Activated CD4-positive, alpha-beta memory T cell treated with anti-CD3 and anti-CD28 coated beads for 36 hours (primary cell): ENCODE measurements at regions of chr11 and their contacts with region 1.

Region 1: DNA sequence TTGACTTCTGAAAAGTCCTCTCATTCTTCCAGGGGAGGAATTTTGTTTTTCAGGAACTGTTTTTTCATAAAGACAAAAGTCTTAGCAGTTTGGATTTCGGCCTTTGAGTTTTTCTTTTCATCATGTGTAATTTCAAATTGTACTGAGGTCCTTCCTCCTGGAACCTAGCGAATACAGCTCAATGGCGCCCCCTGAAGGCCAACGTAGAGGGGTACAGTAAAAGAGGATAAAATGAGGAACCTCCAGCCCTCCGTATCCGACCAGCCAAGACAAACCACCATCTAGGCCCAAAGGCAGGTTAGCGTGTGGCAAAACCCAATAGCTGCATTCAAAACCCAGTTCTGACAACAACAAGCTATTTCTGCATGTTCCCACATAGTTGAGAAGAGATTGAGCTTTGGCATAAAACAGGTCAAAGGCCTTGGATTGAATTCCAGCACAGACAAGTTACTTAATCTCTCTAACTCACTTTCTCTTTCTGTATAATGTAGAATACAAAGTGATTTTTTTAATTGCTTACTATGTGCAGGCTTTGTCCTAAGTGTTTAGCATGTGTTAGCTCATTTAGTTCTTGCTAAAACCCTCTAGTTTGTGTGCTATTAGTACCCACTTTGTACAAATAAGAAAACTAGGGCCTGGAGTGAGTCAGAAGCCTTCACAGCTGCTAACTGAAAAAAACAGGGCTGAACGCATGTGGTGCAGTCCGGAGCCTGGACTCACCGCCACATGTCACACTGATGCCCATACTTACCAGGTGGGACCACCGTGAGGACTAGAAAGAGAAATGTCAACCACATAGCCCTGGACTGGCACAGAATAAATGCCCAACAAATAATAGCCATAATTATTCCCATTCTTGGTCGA is 43.2 kb upstream of the ETS1 start:
- DNase-seq: peak; percentile 94
- H3K4me3 Mint-ChIP-seq: peak overlapping the region; percentile 65
- H3K27ac Mint-ChIP-seq: peak overlapping the region; percentile 92
- H3K4me1 Mint-ChIP-seq: peaks cover 66% of the 10 kb centered on the region
- H3K27me3 Mint-ChIP-seq: no peaks in the 10 kb centered on the region

Region 2: DNA sequence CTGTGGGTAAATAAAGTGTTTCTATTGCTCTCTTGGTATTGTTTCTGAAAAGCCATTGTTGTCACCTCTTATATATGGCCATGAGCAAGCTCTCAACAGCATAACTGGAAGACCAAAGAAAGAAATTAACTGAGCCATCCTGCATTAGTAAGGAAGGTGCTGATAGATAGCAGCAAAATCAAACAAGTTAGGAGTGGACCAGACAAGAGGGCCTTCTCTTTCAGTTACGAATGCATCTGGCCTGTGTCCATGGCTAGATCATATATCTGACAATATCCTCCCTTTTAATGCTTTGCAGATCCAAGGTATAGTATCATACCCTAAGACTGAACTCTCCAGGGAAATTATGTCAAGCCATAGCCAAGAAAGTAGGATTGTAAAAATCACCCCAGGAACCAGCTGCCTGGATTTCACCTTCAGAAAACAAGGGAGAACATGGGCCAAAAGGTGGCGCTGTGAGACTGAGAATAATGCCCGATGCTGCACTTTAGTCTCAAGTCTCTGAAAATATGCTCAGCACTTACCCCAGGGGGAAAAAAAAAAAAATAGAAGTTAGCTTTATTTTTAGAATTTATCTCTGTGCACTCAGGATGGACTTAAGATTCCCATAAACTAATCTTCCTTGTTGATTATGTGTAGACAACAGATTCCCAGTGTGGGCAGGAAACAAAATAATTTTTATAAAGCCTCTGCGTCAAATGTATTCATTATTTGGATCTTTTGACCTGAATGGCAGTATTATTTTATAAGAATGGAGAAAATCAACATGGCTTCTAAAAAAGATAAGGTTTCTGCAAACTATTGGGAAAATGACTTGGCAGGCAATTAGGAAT is 458.3 kb before region 1 on chr11:
- CTCF ChIA-PET with region 1: interaction called, 127 read pairs
- POLR2A ChIA-PET with region 1: no interaction called
- intact Hi-C with region 1: loop called (anchors 1 kb)
- DNase-seq: peak; percentile 91
- H3K4me3 Mint-ChIP-seq: no peak overlapping the region
- H3K27ac Mint-ChIP-seq: peak overlapping the region; percentile 25
- H3K4me1 Mint-ChIP-seq: peaks cover 17% of the 10 kb centered on the region
- H3K27me3 Mint-ChIP-seq: no peaks in the 10 kb centered on the region

Region 3: GRCh38 chr11:128232588-128232987 is 398.0 kb before region 1 on chr11:
- CTCF ChIA-PET with region 1: interaction called, 3 read pairs
- POLR2A ChIA-PET with region 1: no interaction called
- intact Hi-C with region 1: loop called (anchors 2 kb)
- DNase-seq: peak; percentile 85
- H3K4me3 Mint-ChIP-seq: no peak overlapping the region
- H3K27ac Mint-ChIP-seq: peak overlapping the region; percentile 69
- H3K4me1 Mint-ChIP-seq: peaks cover 52% of the 10 kb centered on the region
- H3K27me3 Mint-ChIP-seq: no peaks in the 10 kb centered on the region

Region 4: DNA sequence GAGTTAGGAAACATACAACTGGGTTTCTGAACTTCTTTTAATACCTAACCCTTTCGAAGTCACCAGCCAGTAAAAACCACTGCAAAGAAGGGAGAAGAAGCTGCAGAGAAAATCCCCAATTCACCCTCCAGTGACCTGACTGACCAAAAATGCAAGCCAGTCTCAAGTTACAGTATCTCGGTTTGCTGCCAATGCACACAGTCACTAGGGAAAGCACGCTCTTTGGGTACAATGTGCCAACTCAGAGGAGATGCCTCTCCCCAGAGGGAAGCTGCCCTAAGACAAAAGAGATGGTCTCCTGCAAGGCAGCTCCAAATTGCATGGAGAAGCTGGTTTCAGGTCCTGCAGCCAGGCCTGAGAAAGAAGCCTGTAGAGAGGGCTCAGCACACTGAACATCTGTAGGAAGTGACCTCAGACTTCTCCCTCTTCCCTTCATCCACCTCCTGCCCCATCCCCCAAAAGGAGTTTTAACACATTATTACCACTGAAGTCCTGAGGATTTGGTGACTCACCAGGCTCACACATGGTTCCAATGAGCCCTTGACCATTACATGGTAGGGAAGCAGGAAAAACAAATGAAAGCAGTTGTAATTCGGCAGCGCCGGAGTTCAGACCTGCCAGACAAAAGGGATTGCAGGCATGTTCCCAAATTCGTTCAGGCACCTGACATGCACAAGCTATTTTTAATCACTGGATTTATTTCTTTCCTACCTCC is 133.4 kb before region 1 on chr11:
- CTCF ChIA-PET with region 1: interaction called, 264 read pairs
- POLR2A ChIA-PET with region 1: interaction called, 5 read pairs
- intact Hi-C with region 1: no loop called
- DNase-seq: peak; percentile 67
- H3K4me3 Mint-ChIP-seq: peak overlapping the region; percentile 71
- H3K27ac Mint-ChIP-seq: peak overlapping the region; percentile 91
- H3K4me1 Mint-ChIP-seq: peaks cover 95% of the 10 kb centered on the region
- H3K27me3 Mint-ChIP-seq: no peaks in the 10 kb centered on the region

Region 5: GRCh38 chr11:128512474-128512996 is 118.1 kb before region 1 on chr11:
- CTCF ChIA-PET with region 1: interaction called, 264 read pairs
- POLR2A ChIA-PET with region 1: interaction called, 81 read pairs
- intact Hi-C with region 1: loop called (anchors 1 kb)
- DNase-seq: peak; percentile 67
- H3K4me3 Mint-ChIP-seq: peak overlapping the region; percentile 97
- H3K27ac Mint-ChIP-seq: peak overlapping the region; percentile 96
- H3K4me1 Mint-ChIP-seq: peaks cover 89% of the 10 kb centered on the region
- H3K27me3 Mint-ChIP-seq: no peaks in the 10 kb centered on the region

Region 6: DNA sequence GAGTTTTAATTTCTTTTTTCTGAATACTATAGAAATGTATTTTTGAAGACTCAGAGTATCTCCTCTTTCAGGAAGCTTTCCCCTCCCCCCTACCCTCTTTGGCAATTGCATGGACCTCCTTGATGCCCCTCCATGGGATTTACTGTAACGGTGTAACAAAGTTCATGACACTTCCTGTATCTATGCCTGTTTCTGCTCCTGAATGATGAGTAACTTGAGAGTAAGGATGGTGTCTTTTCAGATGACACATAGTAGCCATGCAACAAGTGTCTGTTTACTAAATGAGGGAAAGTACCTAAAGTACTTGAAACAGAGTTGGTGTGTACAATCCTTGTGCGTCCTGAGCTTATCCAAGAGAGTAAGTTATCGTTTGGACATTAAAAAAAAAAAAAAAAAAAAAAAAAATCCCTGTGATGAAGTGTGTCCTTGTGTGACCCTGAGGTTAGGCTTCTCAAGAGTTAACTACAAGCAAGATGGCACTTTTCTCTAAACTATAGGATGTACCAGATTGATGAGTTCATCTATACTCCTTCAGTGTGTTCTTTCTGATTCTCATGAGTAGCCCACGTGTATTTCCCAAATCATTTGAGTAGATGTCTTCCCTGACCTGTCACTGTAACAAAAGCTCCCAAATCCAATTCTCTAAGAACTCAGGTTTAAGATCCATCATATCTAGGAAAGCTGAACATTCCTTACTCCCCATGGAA is 50.6 kb before region 1 on chr11:
- CTCF ChIA-PET with region 1: interaction called, 4 read pairs
- POLR2A ChIA-PET with region 1: interaction called, 7 read pairs
- intact Hi-C with region 1: loop called (anchors 1 kb)
- DNase-seq: peak; percentile 27
- H3K4me3 Mint-ChIP-seq: peak overlapping the region; percentile 71
- H3K27ac Mint-ChIP-seq: peak overlapping the region; percentile 95
- H3K4me1 Mint-ChIP-seq: peaks cover 68% of the 10 kb centered on the region
- H3K27me3 Mint-ChIP-seq: no peaks in the 10 kb centered on the region

Region 7: GRCh38 chr11:128658502-128658901 is 27.9 kb after region 1 on chr11:
- CTCF ChIA-PET with region 1: no interaction called
- POLR2A ChIA-PET with region 1: no interaction called
- intact Hi-C with region 1: no loop called
- DNase-seq: no peak
- H3K4me3 Mint-ChIP-seq: no peak overlapping the region
- H3K27ac Mint-ChIP-seq: no peak overlapping the region
- H3K4me1 Mint-ChIP-seq: no peaks in the 10 kb centered on the region
- H3K27me3 Mint-ChIP-seq: peaks cover 4% of the 10 kb centered on the region

Region 8: GRCh38 chr11:128831174-128832120 is 200.8 kb after region 1 on chr11:
- CTCF ChIA-PET with region 1: interaction called, 25 read pairs
- POLR2A ChIA-PET with region 1: interaction called, 5 read pairs
- intact Hi-C with region 1: loop called (anchors 1 kb)
- DNase-seq: peak; percentile 93
- H3K4me3 Mint-ChIP-seq: peak overlapping the region; percentile 30
- H3K27ac Mint-ChIP-seq: peak overlapping the region; percentile 89
- H3K4me1 Mint-ChIP-seq: peaks cover 19% of the 10 kb centered on the region
- H3K27me3 Mint-ChIP-seq: no peaks in the 10 kb centered on the region